ENCODE measurements at regions of chr14 and their contacts with region 1.

Region 1: DNA sequence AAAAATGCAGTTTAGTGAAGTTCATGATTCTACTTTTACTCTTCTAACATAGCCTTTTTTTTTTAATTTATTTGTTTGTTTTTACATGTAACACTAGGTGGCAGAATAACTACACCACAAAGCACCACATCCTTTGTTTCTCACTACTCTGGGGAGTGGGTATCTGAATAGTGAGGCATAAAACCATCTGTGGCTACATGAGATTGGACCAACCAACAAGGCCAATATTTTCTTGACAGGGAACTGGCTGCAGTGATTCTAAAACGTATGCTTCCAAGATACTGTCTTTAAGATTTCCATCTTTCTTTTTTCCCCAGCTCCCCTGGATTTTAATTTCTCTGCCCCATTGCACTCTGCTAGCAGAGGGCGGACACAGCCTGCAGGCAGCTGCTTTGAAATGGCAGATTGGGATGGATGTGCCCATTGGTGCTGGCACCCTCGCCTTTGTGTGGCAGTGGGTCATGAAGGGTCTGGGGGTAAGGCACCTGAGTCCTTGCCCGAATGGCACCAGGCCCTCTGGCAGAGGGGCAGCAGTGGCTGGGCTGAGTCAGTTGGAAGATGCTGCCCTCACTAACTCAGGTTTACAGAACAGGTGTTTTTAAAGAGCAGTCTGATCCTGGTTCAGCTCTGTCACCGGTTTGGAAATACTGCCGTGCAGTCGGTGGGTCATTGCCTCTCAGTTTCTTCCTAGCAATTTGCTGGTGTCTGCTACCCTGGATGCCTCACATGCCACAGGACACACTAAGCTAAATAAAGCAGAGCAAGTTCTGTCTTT is 429.1 kb downstream of the RAD51B start:
- DNase-seq: no peak
- H3K4me3 ChIP-seq: no peak overlapping the region
- H3K27ac ChIP-seq: peak overlapping the region; percentile 91 to 92
- H3K4me1 ChIP-seq: peaks cover 18 to 60% of the 10 kb centered on the region in 2 donors
- H3K27me3 ChIP-seq: no peaks in the 10 kb centered on the region
- CTCF ChIP-seq: peak; percentile 52 to 66 (median 62)

Region 2: GRCh38 chr14:67446120-67447032 is 802.3 kb before region 1 on chr14:
- intact Hi-C with region 1: no loop called
- DNase-seq: no peak
- H3K4me3 ChIP-seq: no peak overlapping the region
- H3K27ac ChIP-seq: no peak overlapping the region
- H3K4me1 ChIP-seq: no peaks in the 10 kb centered on the region
- H3K27me3 ChIP-seq: no peaks in the 10 kb centered on the region
- CTCF ChIP-seq: no peak

Region 3: DNA sequence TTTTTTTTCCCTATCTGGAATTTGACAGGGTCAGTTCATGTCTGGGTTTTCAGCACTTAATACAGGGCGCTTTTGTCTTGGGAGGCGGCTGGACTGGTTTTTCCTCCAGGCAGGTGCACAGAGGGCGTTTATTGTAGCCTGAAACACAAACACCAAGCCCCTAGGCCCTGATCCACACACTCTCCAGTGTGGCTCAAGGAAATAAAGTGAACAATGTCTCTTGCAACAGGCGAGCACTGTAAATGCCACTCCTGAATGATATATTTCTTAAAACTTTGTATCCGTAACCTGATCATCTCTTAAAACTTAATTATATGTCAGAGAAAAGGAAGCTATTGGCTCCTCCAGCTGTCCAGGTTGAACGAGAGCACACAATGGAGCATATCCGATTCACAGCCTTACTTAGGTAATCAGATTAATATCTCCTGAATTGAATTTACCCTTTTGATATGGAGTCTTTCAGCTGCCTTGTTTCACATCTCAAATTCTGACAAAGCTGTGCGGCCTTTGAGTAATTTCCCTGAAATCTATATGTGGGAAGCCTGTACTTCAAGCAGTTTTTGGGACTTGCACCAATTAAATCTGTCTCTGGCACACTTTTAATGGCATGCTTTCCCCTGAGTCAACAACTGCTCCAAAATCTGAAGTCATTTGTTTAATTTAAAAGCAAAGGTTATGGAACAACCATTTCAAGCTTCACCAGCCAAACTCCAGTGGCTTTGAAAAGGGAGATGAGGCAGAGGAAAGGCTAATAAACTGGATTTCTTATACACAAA is 58.5 kb after region 1 on chr14:
- intact Hi-C with region 1: loop called (anchors 5 kb)
- DNase-seq: peak in 1 of 2 donors; percentile 67
- H3K4me3 ChIP-seq: no peak overlapping the region
- H3K27ac ChIP-seq: peak overlapping the region; percentile 68 to 72
- H3K4me1 ChIP-seq: peaks cover 0 to 22% of the 10 kb centered on the region in 2 donors
- H3K27me3 ChIP-seq: no peaks in the 10 kb centered on the region
- CTCF ChIP-seq: no peak

Region 4: GRCh38 chr14:68466491-68467032 is 217.9 kb after region 1 on chr14:
- intact Hi-C with region 1: loop called (anchors 5 kb)
- DNase-seq: peak in 1 of 2 donors; percentile 66
- H3K4me3 ChIP-seq: no peak overlapping the region
- H3K27ac ChIP-seq: peak overlapping the region; percentile 6 to 33
- H3K4me1 ChIP-seq: peaks cover 3 to 20% of the 10 kb centered on the region in 2 donors
- H3K27me3 ChIP-seq: no peaks in the 10 kb centered on the region
- CTCF ChIP-seq: no peak

Region 5: GRCh38 chr14:68682166-68683103 is 433.8 kb after region 1 on chr14:
- intact Hi-C with region 1: loop called (anchors 5 kb)
- DNase-seq: peak; percentile 41 to 81
- H3K4me3 ChIP-seq: no peak overlapping the region
- H3K27ac ChIP-seq: peak overlapping the region; percentile 65 to 84
- H3K4me1 ChIP-seq: peaks cover 13 to 40% of the 10 kb centered on the region in 2 donors
- H3K27me3 ChIP-seq: no peaks in the 10 kb centered on the region
- CTCF ChIP-seq: no peak

Region 6: DNA sequence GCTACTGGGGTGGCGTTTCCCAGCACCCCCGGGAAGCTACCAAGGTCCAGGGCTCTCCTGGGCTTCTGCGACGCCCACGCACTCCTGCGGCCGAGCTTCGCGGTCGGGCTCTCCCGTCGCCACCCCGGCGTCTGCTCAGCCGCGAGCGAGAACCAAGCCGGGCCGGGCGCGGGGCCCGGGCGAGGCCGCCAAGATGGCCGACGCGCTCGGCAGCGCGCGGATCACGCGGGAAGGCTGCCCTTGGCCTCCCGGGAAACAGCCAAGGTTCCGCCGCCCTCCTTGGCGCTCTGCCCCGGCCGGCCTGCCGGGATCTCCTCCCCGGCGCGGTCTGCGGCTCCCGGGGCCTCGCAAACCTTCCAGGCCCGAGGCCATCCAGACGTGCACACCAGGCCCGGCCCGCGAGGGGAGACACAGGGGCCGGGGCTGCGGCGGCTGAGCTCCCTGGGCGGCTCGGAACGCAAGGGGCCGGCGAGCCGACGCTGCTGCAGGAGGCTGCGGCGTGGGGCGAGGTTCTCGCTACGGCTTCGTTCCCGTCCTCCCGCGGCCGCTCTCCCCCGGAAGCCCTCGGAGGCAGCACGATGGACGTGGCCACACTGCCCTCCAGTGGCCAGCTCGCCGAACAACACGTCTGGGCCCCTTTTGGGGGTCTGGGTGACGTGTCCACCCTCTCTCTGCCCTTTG is 567.7 kb after region 1 on chr14:
- intact Hi-C with region 1: loop called (anchors 1 kb)
- DNase-seq: peak; percentile 56 to 93
- H3K4me3 ChIP-seq: peak overlapping the region; percentile 56 to 67
- H3K27ac ChIP-seq: peak overlapping the region; percentile 96 to 97
- H3K4me1 ChIP-seq: peaks cover 12 to 24% of the 10 kb centered on the region in 2 donors
- H3K27me3 ChIP-seq: no peaks in the 10 kb centered on the region
- CTCF ChIP-seq: peak; percentile 95 to 100 (median 98)

Measured in ascending aorta (tissue), 2 donors.